Aorta (tissue), 5 donors: ENCODE measurements at regions of chr5 and their contacts with region 1.

Region 1: DNA sequence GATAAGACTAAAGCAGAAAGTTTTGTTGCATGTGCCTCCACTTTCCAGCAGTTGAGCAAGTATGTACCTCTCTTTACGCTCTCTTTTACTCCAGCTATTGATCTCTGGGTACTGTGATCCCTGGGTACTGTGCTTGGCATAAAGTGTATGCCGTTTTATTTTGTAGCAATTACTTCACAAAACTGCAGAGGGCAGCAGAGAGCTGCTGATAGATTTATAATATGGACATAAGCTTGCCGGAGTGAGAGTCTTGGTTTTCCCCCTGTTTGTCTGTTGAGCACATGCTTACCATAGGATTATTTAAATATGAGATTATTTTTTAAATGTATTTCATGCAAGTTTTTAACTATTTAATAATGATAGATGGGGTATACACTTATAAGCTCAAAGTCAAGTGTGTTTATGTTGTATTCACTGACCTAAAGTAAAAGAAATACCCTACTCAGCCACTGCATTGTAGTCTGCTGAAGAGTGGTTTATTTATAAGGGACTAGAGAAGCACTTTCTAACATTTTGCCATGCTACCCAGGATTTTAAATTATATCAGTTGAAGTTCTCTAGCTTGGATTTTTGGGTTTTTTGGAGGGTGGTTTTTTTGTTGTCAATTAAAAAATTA is 13.0 kb downstream of the TTC1 start:
- DNase-seq: no peak
- ATAC-seq: peak; percentile 90
- H3K4me3 ChIP-seq: no peak overlapping the region
- H3K27ac ChIP-seq: no peak overlapping the region
- H3K4me1 ChIP-seq: no peaks in the 10 kb centered on the region
- H3K27me3 ChIP-seq: no peaks in the 10 kb centered on the region

Region 2: DNA sequence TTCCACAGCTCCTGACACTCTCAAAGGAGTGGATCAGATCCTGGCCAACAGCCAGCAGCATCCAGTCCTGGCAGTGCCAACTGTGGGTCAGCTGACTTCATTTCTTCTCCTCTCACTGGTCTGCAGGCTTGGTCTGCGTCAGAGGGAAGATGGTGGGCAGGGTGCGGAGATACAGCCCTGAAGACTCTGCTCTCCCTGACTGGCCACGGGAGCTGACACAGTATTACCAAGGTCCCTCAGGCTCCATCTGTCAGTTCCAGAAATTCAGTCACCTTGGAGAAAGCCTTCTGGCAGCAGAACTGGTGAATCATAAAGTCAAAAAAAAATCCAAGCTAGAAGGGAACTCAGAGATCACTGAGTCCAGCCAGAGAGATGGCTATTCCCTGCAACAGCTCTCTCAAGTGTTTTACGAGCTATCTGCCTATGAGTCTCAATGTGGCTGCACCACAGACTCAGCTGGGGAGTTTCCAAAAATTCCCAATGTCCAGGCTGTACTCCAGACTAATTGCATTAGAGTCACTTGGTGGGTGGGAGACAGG is 320.5 kb after region 1 on chr5:
- intact Hi-C with region 1: loop called (anchors 1 to 5 kb)
- DNase-seq: no peak
- ATAC-seq: peak; percentile 22
- H3K4me3 ChIP-seq: no peak overlapping the region
- H3K27ac ChIP-seq: no peak overlapping the region
- H3K4me1 ChIP-seq: no peaks in the 10 kb centered on the region
- H3K27me3 ChIP-seq: no peaks in the 10 kb centered on the region

Region 3: GRCh38 chr5:160390787-160391696 is 369.1 kb after region 1 on chr5:
- intact Hi-C with region 1: loop called (anchors 5 kb)
- DNase-seq: no peak
- ATAC-seq: no peak
- H3K4me3 ChIP-seq: no peak overlapping the region
- H3K27ac ChIP-seq: no peak overlapping the region
- H3K4me1 ChIP-seq: peaks cover 0 to under 1% of the 10 kb centered on the region in 2 donors
- H3K27me3 ChIP-seq: no peaks in the 10 kb centered on the region

Region 4: DNA sequence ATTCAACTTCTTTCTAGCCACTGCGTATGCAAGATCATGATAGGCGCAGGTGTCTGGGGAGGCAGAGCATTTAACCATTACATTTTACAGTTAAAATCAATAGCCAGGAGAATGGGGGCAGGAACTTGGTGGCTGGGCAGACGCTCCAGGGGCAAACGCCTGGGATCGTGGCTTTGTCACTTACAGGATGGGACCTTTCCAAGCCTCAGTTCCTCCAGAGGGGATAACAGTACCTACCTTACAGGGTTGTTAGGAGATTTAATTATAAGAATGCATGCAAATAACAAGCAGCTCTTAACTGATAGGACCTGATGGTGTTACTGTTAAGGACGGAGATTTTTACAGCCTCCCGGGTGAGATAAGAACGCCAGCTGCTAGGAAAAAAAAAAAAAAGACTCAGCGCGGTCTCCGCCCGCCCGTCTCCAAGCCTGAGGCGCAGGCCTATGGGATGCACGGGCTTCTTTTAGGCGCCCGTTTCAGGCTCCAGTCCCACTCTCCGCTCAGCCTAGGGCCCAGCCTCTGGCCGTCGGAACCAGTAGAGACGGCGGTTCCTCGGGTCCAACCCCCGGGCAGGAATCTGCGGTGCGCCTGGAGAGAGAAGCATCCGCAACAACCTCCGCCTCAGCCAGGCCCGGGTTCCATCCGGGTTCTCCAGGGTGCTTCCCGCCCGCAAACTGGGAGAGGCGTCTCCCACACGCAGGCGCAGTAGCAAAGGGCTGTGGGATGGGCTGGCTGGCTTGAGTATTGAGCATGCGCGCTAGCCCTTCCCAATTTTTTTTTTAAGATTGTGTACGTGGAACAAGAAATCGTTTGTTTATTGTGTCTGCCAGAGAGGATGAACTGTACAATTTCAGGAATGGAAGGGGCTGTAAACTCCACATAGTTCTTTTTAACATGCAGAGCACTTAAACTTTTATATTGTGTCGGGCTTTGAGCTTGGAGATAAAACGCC is 377.7 kb after region 1 on chr5 and contains the start of gene FAM200C:
- intact Hi-C with region 1: loop called (anchors 5 kb)
- DNase-seq: peak; percentile 96
- ATAC-seq: peak; percentile 96
- H3K4me3 ChIP-seq: peak within 1 kb of the TSS; percentile 55 to 95
- H3K27ac ChIP-seq: peak within 1 kb of the TSS; percentile 38 to 96
- H3K4me1 ChIP-seq: peaks cover 2 to 3% of the 10 kb centered on the region in 2 donors
- H3K27me3 ChIP-seq: no peaks in the 10 kb centered on the region
- total RNA-seq, gene FAM200C: 4.9 to 8.2 TPM